ENCODE measurements at regions of chrX and their contacts with region 1.

Region 1: GRCh38 chrX:151151665-151152267 is 24.6 kb upstream of the GPR50 start:
- DNase-seq: no peak
- H3K4me3 ChIP-seq: no peak overlapping the region
- H3K27ac ChIP-seq: no peak overlapping the region
- H3K4me1 ChIP-seq: no peaks in the 10 kb centered on the region
- H3K27me3 ChIP-seq: peaks cover 0 to 3% (median 0%) of the 10 kb centered on the region in 4 donors
- CTCF ChIP-seq: peak; percentile 43 to 83 (median 61)
- POLR2A ChIP-seq: no peak

Region 2: GRCh38 chrX:151009582-151009981 is 142.2 kb before region 1 on chrX:
- intact Hi-C with region 1: no loop called
- DNase-seq: no peak
- H3K4me3 ChIP-seq: no peak overlapping the region
- H3K27ac ChIP-seq: no peak overlapping the region
- H3K4me1 ChIP-seq: no peaks in the 10 kb centered on the region
- H3K27me3 ChIP-seq: no peaks in the 10 kb centered on the region
- CTCF ChIP-seq: no peak
- POLR2A ChIP-seq: no peak

Region 3: DNA sequence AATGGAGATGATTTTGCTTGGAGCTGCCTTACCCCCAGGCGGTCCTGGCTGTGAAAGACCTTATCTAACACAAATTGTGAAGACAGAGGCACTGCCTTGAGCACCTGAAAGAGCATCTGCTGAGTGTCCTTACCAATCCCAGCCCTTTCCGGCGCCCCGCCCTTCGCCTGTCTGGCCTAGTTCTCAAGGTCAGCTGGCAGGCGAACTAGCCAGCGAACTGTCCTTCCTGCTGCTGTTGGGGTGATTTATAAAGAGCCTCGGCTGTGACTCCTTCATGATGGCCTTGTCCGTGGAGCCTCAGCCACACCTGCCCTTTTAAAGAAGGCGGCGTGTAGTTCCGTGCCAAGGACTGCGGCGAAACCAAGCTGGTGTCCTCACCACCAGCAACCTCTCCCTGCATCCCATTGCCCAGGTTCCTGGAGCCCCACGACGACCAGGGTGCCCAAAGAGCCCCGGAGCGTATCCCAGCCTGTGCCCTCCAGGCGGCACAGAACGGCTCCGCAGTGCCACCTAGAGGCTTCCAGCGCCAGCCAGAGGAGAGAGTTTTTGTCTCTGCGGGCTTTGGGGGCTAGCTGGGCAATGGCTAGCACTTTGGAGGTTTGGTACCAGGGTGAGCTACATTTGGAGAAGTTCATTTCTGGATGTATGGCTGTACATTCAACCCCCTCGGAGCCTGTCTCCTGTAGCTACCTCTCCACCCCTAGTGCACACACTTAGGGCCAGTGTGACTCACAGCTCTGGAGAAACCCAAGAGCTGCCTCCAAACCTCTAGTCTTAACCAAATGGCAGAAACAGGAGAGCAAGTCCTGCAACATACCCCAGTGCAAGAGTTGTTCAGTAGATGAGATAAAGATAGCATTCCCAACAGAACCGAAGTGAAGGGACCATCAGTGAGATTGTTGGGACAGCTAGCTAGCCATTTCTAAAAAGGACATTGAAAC is 208.4 kb after region 1 on chrX:
- intact Hi-C with region 1: loop called (anchors 10 kb)
- DNase-seq: no peak
- H3K4me3 ChIP-seq: peak overlapping the region in 1 of 4 donors; percentile 40
- H3K27ac ChIP-seq: no peak overlapping the region
- H3K4me1 ChIP-seq: peaks cover 0 to 5% (median 0%) of the 10 kb centered on the region in 3 donors
- H3K27me3 ChIP-seq: peaks cover 0 to 7% (median 0%) of the 10 kb centered on the region in 4 donors
- CTCF ChIP-seq: peak in 5 of 6 experiments; percentile 28 to 58 (median 45)
- POLR2A ChIP-seq: no peak

Region 4: GRCh38 chrX:151505796-151506195 is 354.0 kb after region 1 on chrX:
- intact Hi-C with region 1: loop called (anchors 10 kb)
- DNase-seq: no peak
- H3K4me3 ChIP-seq: no peak overlapping the region
- H3K27ac ChIP-seq: no peak overlapping the region
- H3K4me1 ChIP-seq: no peaks in the 10 kb centered on the region
- H3K27me3 ChIP-seq: no peaks in the 10 kb centered on the region
- CTCF ChIP-seq: peak in 4 of 6 experiments; percentile 11 to 46 (median 28)
- POLR2A ChIP-seq: no peak

Region 5: DNA sequence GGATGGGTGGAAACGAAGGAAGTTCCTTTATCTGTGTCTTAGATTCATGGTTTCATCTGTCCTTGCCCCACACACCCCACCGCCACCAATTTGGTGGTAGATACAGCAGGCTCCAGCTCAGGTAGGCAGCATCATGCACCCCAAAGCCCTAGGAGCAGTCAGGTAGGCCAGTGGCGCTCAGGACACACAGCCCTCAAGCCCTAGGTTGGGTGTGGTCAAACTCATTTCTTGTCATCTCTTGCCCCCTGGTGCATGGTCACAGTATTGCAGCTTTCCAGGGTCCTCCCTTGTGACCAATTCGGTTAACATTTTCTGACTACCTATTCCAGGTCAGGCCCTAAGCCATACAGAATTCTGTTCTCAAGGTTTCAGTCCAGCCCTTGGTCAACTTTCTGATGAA is 529.0 kb after region 1 on chrX:
- intact Hi-C with region 1: loop called (anchors 5 kb)
- DNase-seq: no peak
- H3K4me3 ChIP-seq: no peak overlapping the region
- H3K27ac ChIP-seq: no peak overlapping the region
- H3K4me1 ChIP-seq: no peaks in the 10 kb centered on the region
- H3K27me3 ChIP-seq: no peaks in the 10 kb centered on the region
- CTCF ChIP-seq: peak in 5 of 6 experiments; percentile 52 to 70 (median 63)
- POLR2A ChIP-seq: no peak

Measured in esophagus squamous epithelium (tissue), 5 donors.